Heart left ventricle (tissue), 16 donors: ENCODE measurements at regions of chr16 and their contacts with region 1.

Region 1: DNA sequence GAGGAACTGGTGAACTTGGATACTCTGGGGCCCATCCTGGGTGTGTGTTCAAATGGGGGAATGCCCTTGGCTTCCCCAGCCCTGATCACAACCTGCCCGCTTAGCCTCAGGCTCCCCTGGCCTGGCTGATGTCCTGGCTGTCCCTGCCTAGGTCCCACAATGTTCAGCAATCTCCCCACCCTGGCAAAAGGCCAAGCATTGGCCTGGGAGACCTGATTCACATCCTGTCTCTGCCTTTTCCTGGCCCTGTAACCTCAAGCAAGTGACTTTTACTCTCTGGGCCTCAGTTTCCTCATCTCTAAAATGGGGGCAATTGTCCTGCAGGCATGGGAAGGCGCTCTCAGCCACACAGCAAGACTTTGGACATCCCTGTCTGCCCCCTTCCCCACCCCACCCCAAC is 14.4 kb downstream of the CPNE2 start:
- DNase-seq: peak; percentile 59 to 75 (median 65)
- ATAC-seq: peak in 3 of 4 donors; percentile 63 to 86 (median 65)
- H3K4me3 ChIP-seq: no peak overlapping the region
- H3K27ac ChIP-seq: no peak overlapping the region
- H3K4me1 ChIP-seq: peaks cover 0 to 34% (median 11%) of the 10 kb centered on the region in 12 donors
- H3K27me3 ChIP-seq: no peaks in the 10 kb centered on the region
- CTCF ChIP-seq: no peak
- POLR2A ChIP-seq: no peak

Region 2: GRCh38 chr16:57141822-57142631 is 35.3 kb after region 1 on chr16:
- intact Hi-C with region 1: loop called in 2 of 10 experiments (anchors 5 kb)
- DNase-seq: no peak
- ATAC-seq: no peak
- H3K4me3 ChIP-seq: no peak overlapping the region
- H3K27ac ChIP-seq: peak overlapping the region in 3 of 12 donors; percentile 8 to 39 (median 28)
- H3K4me1 ChIP-seq: peaks cover 7 to 77% (median 53%) of the 10 kb centered on the region in 12 donors
- H3K27me3 ChIP-seq: no peaks in the 10 kb centered on the region
- CTCF ChIP-seq: no peak
- POLR2A ChIP-seq: no peak

Region 3: DNA sequence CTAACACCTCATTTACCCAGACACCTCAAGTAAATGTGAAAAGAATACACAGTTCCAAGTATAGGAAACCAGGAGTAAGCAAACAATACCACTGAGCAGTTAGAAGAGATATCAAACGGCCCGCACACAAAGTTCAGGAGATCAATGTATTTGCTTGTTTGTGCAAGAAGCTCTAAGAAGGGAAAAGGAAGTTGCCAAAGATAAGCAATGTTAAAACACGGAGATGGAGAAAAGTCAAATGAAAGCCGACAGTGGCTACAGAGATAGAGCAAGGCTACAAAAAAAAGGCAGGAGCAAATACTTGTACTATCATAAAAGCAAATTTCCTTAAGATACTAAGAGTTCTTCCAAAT is 49.6 kb after region 1 on chr16:
- intact Hi-C with region 1: loop called in 1 of 10 experiments (anchors 5 kb)
- DNase-seq: no peak
- ATAC-seq: no peak
- H3K4me3 ChIP-seq: no peak overlapping the region
- H3K27ac ChIP-seq: no peak overlapping the region
- H3K4me1 ChIP-seq: peaks cover 0 to 19% (median 0%) of the 10 kb centered on the region in 12 donors
- H3K27me3 ChIP-seq: no peaks in the 10 kb centered on the region
- CTCF ChIP-seq: no peak
- POLR2A ChIP-seq: no peak